WTC11 (cell line): ENCODE measurements at regions of chr15 and their contacts with region 1.

Region 1: DNA sequence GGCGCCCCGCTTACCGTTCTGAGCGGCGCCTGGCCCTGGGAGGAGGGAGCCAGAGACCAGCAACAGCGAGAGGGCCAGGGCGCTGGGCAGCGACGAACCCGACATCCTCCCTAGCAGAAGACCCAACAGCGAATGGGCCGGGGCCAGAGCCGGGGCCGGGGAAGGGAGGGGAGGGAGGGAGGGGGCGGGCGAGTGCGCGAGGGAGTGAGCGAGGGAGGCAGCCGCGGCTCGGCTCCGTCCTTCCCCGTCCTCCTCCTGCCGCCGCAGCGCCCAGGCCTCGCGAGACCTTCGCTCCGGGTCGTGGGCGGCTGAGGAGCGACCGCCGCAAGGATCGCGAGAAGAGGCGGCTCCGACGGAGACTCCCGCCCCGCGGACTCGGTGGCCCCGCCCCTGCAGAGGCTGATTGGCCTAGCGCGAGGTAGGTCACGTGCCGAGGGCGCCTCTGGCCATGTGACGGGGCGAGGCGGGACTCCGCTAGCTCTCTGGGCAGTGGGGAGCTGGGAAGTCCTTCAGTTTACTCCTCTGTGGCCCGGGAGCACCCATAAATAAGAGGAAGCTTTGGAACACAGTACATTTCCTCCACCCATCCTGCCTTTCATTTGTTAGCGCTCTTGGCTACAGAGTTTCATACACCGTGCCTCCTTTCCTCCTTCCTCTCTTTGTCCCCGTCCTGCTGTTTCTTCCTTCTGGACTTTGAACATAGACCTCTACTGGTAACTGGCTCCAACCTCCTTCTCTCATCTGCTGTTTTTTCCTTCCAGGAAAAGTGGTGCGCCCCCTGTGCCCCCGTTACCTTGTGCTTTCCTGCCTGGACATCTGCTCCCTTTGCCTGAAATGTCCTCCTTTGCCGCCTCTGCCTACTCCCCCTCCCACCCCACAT is at the start of gene NPTN:
- DNase-seq: peak; percentile 99
- ATAC-seq: peak; percentile 92
- H3K4me3 Mint-ChIP-seq: peak within 1 kb of the TSS; percentile 76
- H3K27ac Mint-ChIP-seq: peak within 1 kb of the TSS; percentile 97
- H3K4me1 Mint-ChIP-seq: peaks cover 57% of the 10 kb centered on the region
- H3K27me3 Mint-ChIP-seq: peaks cover 4% of the 10 kb centered on the region
- CTCF ChIP-seq: no peak
- total RNA-seq, gene NPTN: 96.1 to 116 TPM (median 102 TPM) in 3 replicates

Region 2: GRCh38 chr15:73225358-73226015 is 407.9 kb before region 1 on chr15:
- CTCF ChIA-PET with region 1: no interaction called
- POLR2A ChIA-PET with region 1: no interaction called
- DNase-seq: peak; percentile 24
- ATAC-seq: peak; percentile 72
- H3K4me3 Mint-ChIP-seq: no peak overlapping the region
- H3K27ac Mint-ChIP-seq: peak overlapping the region; percentile 58
- H3K4me1 Mint-ChIP-seq: peaks cover 33% of the 10 kb centered on the region
- H3K27me3 Mint-ChIP-seq: peaks cover 3% of the 10 kb centered on the region; the same call in 1 of the 2 replicates
- CTCF ChIP-seq: no peak

Region 3: GRCh38 chr15:73560501-73561117 is 72.7 kb before region 1 on chr15:
- CTCF ChIA-PET with region 1: interaction called, 23 read pairs
- POLR2A ChIA-PET with region 1: no interaction called
- DNase-seq: no peak
- ATAC-seq: peak; percentile 46; the same call in 1 of the 2 replicates
- H3K4me3 Mint-ChIP-seq: no peak overlapping the region
- H3K27ac Mint-ChIP-seq: no peak overlapping the region
- H3K4me1 Mint-ChIP-seq: peaks cover 13% of the 10 kb centered on the region
- H3K27me3 Mint-ChIP-seq: no peaks in the 10 kb centered on the region
- CTCF ChIP-seq: no peak; the same call in 1 of the 2 replicates

Region 4: GRCh38 chr15:73608941-73609340 is 24.4 kb before region 1 on chr15:
- CTCF ChIA-PET with region 1: interaction called, 74 read pairs
- POLR2A ChIA-PET with region 1: no interaction called
- DNase-seq: no peak
- ATAC-seq: no peak
- H3K4me3 Mint-ChIP-seq: no peak overlapping the region
- H3K27ac Mint-ChIP-seq: peak overlapping the region; percentile 3; the same call in 1 of the 2 replicates
- H3K4me1 Mint-ChIP-seq: peaks cover 45% of the 10 kb centered on the region
- H3K27me3 Mint-ChIP-seq: 0 out of 2 replicates have a peak, but pooled peaks cover 2% of the 10 kb centered on the region
- CTCF ChIP-seq: no peak

Region 5: DNA sequence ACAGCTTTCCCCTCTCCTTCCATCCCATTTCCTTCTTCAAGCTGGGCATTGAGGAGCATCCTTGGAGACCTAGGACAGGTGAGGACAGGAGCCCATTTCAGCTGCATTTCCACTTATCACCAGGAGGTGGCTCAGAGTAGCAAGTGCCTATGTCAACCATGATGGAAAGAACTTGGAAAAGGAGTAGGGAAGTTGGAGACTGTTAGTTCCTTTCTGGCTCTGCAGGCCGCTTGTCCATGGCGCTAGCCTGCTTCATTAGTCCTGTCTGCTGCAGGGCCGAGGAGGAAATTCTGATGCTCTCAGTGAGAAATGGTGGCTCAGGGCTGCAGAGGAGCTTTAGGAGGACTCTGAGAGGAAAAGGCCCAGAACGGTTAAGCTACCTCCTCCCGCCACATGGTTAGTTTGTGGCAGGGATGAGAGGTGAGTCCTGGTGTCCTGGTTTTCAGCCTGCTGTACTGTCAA is 43.8 kb after region 1 on chr15:
- CTCF ChIA-PET with region 1: interaction called, 63 read pairs
- POLR2A ChIA-PET with region 1: no interaction called
- DNase-seq: peak; percentile 78
- ATAC-seq: peak; percentile 92
- H3K4me3 Mint-ChIP-seq: no peak overlapping the region
- H3K27ac Mint-ChIP-seq: no peak overlapping the region
- H3K4me1 Mint-ChIP-seq: peaks cover 12% of the 10 kb centered on the region
- H3K27me3 Mint-ChIP-seq: no peaks in the 10 kb centered on the region; the same call in 1 of the 2 replicates
- CTCF ChIP-seq: peak; percentile 70; the same call in 1 of the 2 replicates

Region 6: DNA sequence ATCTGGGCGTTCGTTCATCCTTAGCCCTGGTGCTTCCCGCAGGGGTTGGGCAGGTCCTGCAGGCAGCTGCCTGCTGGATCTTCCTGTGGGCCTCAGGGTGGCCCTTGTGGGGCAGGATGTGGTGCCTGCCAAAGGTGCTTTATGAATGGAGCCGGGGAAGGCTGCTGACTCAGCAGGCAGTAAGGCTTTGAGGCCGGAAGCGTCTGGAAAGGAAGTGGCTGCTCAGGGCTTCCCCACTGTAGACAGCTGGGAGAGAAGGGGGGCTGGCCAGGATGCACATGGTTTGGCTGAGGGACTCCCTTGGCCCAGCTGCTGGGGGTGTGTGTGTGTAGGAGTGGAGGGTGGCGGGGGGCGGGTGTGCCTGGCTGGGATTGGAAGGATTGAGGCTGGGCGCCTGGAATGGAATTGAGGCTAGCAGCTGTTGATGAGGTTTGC is 63.7 kb after region 1 on chr15:
- CTCF ChIA-PET with region 1: interaction called, 142 read pairs
- POLR2A ChIA-PET with region 1: no interaction called
- DNase-seq: peak; percentile 54
- ATAC-seq: peak; percentile 63
- H3K4me3 Mint-ChIP-seq: no peak overlapping the region
- H3K27ac Mint-ChIP-seq: peak overlapping the region; percentile 73
- H3K4me1 Mint-ChIP-seq: peaks cover 66% of the 10 kb centered on the region
- H3K27me3 Mint-ChIP-seq: no peaks in the 10 kb centered on the region
- CTCF ChIP-seq: no peak

Region 7: GRCh38 chr15:73746883-73747282 is 113.5 kb after region 1 on chr15:
- CTCF ChIA-PET with region 1: interaction called, 12 read pairs
- POLR2A ChIA-PET with region 1: no interaction called
- DNase-seq: no peak
- ATAC-seq: no peak
- H3K4me3 Mint-ChIP-seq: no peak overlapping the region
- H3K27ac Mint-ChIP-seq: no peak overlapping the region
- H3K4me1 Mint-ChIP-seq: peaks cover 50% of the 10 kb centered on the region
- H3K27me3 Mint-ChIP-seq: peaks cover 14% of the 10 kb centered on the region
- CTCF ChIP-seq: no peak